GM12878 (cell line): ENCODE measurements at regions of chr1 and their contacts with region 1.

Region 1: GRCh38 chr1:46247436-46248121 is at the start of gene RAD54L:
- DNase-seq: peak; percentile 94
- ATAC-seq: peak; percentile 95
- H3K4me3 ChIP-seq: peak within 1 kb of the TSS; percentile 96
- H3K27ac ChIP-seq: peak within 1 kb of the TSS; percentile 84
- H3K4me1 ChIP-seq: peaks cover 7% of the 10 kb centered on the region; the same call in 1 of the 2 replicates
- H3K27me3 ChIP-seq: no peaks in the 10 kb centered on the region
- CTCF ChIP-seq: no peak
- EP300 ChIP-seq: no peak
- POLR2A ChIP-seq: peak; percentile 78
- RAD21 ChIP-seq: no peak
- polyA plus RNA-seq, gene RAD54L: 15.8 to 26.1 TPM

Region 2: DNA sequence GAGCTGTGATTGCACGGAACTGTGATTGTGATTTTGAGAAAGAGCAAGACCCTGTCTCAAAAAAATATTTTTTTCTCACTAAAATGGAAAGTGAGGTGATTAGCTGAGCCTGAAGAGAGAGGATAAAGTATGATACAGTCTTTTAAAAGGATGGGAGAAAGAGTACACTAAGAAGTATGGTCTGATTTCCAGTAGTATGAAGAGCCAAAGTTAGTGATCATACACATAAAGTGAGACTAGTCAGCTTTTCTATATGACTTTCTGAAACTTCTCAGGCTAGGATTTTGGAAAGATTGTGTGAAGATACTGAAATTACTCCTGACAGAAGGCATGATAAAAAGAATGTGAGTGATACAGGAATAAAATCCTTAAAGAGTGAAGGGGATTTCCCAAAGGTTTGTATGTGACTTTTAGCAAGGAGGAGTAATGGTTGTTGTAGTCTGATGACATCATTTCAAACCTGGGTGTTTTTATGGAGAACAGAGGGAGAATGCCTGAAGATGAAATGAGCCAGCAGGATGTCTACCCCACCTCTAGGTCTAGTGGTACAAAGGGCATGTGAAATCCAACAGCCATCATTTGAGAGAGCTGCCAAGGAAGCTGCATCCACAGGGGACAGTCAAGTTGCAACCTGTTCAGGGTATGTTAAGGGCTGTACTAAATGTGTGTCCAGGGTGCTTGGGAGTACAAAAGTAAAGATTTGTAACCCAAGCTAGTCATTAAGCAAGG is 272.9 kb before region 1 on chr1:
- CTCF ChIA-PET with region 1: no interaction called
- POLR2A ChIA-PET with region 1: no interaction called
- RAD21 ChIA-PET with region 1: no interaction called
- SMC1A ChIA-PET with region 1: no interaction called
- in situ Hi-C with region 1: no loop called
- intact Hi-C with region 1: no loop called
- DNase-seq: no peak
- ATAC-seq: peak; percentile 29; the same call in 2 of the 3 replicates
- H3K4me3 ChIP-seq: no peak overlapping the region
- H3K27ac ChIP-seq: no peak overlapping the region
- H3K4me1 ChIP-seq: no peaks in the 10 kb centered on the region
- H3K27me3 ChIP-seq: no peaks in the 10 kb centered on the region
- CTCF ChIP-seq: no peak
- EP300 ChIP-seq: no peak
- POLR2A ChIP-seq: no peak
- RAD21 ChIP-seq: no peak

Region 3: GRCh38 chr1:46236882-46237281 is 10.7 kb before region 1 on chr1:
- CTCF ChIA-PET with region 1: interaction called, 25 read pairs
- POLR2A ChIA-PET with region 1: no interaction called
- RAD21 ChIA-PET with region 1: no interaction called
- SMC1A ChIA-PET with region 1: interaction called, 7 read pairs
- in situ Hi-C with region 1: no loop called
- intact Hi-C with region 1: no loop called
- DNase-seq: no peak
- ATAC-seq: no peak
- H3K4me3 ChIP-seq: no peak overlapping the region
- H3K27ac ChIP-seq: no peak overlapping the region
- H3K4me1 ChIP-seq: no peaks in the 10 kb centered on the region
- H3K27me3 ChIP-seq: no peaks in the 10 kb centered on the region
- CTCF ChIP-seq: no peak
- EP300 ChIP-seq: no peak
- POLR2A ChIP-seq: no peak
- RAD21 ChIP-seq: no peak

Region 4: GRCh38 chr1:46303038-46303871 is 55.7 kb after region 1 on chr1 and contains the starts of genes LRRC41 and UQCRH:
- CTCF ChIA-PET with region 1: interaction called, 6 read pairs
- POLR2A ChIA-PET with region 1: interaction called, 8 read pairs
- RAD21 ChIA-PET with region 1: interaction called, 13 read pairs
- SMC1A ChIA-PET with region 1: interaction called, 4 read pairs
- in situ Hi-C with region 1: no loop called
- intact Hi-C with region 1: loop called (anchors 1 kb)
- DNase-seq: peak; percentile 93
- ATAC-seq: peak; percentile 83
- H3K4me3 ChIP-seq: peak within 1 kb of the TSS; percentile 98
- H3K27ac ChIP-seq: peak within 1 kb of the TSS; percentile 91
- H3K4me1 ChIP-seq: peaks cover 15% of the 10 kb centered on the region
- H3K27me3 ChIP-seq: no peaks in the 10 kb centered on the region
- CTCF ChIP-seq: 0 out of 6 replicates have a peak, but pooled peaks of 1 of the 3 experiments have one; percentile 1
- EP300 ChIP-seq: no peak
- POLR2A ChIP-seq: peak; percentile 93
- RAD21 ChIP-seq: no peak
- polyA plus RNA-seq, gene LRRC41: 12.0 to 12.6 TPM
- polyA plus RNA-seq, gene UQCRH: 1,451 to 1,539 TPM

Region 5: GRCh38 chr1:46333300-46334029 is 85.9 kb after region 1 on chr1:
- CTCF ChIA-PET with region 1: interaction called, 12 read pairs
- POLR2A ChIA-PET with region 1: interaction called, 8 read pairs
- RAD21 ChIA-PET with region 1: interaction called, 8 read pairs
- SMC1A ChIA-PET with region 1: interaction called, 5 read pairs
- in situ Hi-C with region 1: no loop called
- intact Hi-C with region 1: no loop called
- DNase-seq: peak; percentile 77
- ATAC-seq: peak; percentile 58
- H3K4me3 ChIP-seq: peak overlapping the region; percentile 16; the same call in 1 of the 2 replicates
- H3K27ac ChIP-seq: peak overlapping the region; percentile 98
- H3K4me1 ChIP-seq: peaks cover 22% of the 10 kb centered on the region
- H3K27me3 ChIP-seq: no peaks in the 10 kb centered on the region
- CTCF ChIP-seq: peak; percentile 49 to 73 (median 53)
- EP300 ChIP-seq: 0 out of 4 replicates have a peak, but pooled peaks of 1 of the 2 experiments have one; percentile 17
- POLR2A ChIP-seq: peak; percentile 77
- RAD21 ChIP-seq: peak; percentile 70

Region 6: DNA sequence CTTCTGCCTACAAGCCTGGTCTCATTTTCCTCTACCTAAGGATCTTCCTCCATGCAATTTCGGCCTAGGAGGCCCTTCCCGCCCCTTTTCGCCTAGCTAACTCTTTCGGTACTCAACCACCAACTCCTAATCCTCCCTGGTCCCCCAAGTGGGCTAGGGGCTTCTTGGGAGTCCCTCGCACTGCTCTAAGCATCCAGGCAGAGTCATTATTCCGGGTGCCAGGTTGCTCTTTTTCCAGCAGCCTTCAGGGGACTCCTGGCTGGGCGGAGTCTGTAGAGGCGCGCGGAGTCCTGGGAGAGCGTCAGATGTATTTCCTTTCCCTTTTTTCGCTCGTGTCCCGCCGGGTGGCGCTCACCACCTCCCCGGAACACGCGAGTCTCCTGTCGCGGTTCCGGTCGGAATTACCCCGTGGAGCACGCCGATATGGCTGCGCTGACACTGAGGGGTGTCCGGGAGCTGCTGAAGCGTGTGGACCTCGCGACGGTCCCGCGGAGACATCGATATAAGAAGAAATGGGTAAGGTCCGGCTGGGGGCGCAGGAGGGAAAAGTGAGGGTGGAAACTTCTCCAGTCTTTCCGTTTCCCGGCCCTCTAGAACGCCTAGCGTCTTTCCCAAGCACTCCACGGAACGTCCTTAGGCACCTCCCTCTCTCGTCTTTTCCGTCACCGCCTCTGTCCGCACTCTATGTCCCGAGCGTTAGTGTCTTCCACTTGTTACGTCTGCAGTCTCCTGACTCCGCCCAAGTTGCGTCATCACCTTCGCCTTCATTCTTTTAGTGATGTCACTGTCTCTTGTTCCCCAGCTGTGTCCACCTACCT is 93.0 kb after region 1 on chr1 and contains the start of gene NSUN4:
- CTCF ChIA-PET with region 1: interaction called, 86 read pairs
- POLR2A ChIA-PET with region 1: interaction called, 3 read pairs
- RAD21 ChIA-PET with region 1: interaction called, 6 read pairs
- SMC1A ChIA-PET with region 1: interaction called, 12 read pairs
- in situ Hi-C with region 1: no loop called
- intact Hi-C with region 1: no loop called
- DNase-seq: peak; percentile 69
- ATAC-seq: peak; percentile 85
- H3K4me3 ChIP-seq: peak within 1 kb of the TSS; percentile 80
- H3K27ac ChIP-seq: peak within 1 kb of the TSS; percentile 97
- H3K4me1 ChIP-seq: peaks cover 16% of the 10 kb centered on the region; the same call in 1 of the 2 replicates
- H3K27me3 ChIP-seq: no peaks in the 10 kb centered on the region
- CTCF ChIP-seq: peak; percentile 64 to 87 (median 70)
- EP300 ChIP-seq: no peak; a peak in 1 of 4 replicates
- POLR2A ChIP-seq: peak; percentile 90
- RAD21 ChIP-seq: peak; percentile 20; the same call in 1 of the 2 replicates
- polyA plus RNA-seq, gene NSUN4: 22.1 to 26.6 TPM

Region 7: DNA sequence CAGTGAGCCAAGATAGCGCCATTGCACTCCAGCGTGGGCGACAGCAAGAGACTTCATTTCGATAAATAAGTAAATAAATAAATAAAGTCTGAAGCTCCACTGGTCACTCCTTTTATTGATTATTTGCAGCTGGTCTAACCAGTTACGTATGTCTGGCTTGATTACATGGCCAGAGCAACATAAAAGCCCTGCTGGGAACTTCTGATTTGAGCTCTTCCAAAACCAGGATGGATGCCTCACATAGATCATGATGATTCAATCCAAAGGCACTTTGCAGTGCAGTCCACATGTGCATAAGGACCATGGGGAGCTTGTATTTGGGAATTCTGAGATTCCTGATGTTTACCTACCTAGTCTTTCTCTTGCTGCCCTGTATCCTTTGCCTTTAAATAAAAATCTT is 117.0 kb after region 1 on chr1:
- CTCF ChIA-PET with region 1: no interaction called
- POLR2A ChIA-PET with region 1: no interaction called
- RAD21 ChIA-PET with region 1: no interaction called
- SMC1A ChIA-PET with region 1: no interaction called
- in situ Hi-C with region 1: no loop called
- intact Hi-C with region 1: no loop called
- DNase-seq: no peak
- ATAC-seq: no peak
- H3K4me3 ChIP-seq: no peak overlapping the region
- H3K27ac ChIP-seq: no peak overlapping the region
- H3K4me1 ChIP-seq: peaks cover 1% of the 10 kb centered on the region; the same call in 1 of the 2 replicates
- H3K27me3 ChIP-seq: no peaks in the 10 kb centered on the region
- CTCF ChIP-seq: no peak
- EP300 ChIP-seq: no peak
- POLR2A ChIP-seq: no peak
- RAD21 ChIP-seq: no peak